ENCODE measurements at regions of chr10 and their contacts with region 1.

Region 1: GRCh38 chr10:98852686-98853085 is 383.0 kb downstream of the HPSE2 start:
- DNase-seq: no peak
- ATAC-seq: peak; percentile 43; the same call in 1 of the 2 replicates
- H3K4me3 Mint-ChIP-seq: no peak overlapping the region
- H3K27ac Mint-ChIP-seq: no peak overlapping the region
- H3K4me1 Mint-ChIP-seq: peaks cover 6% of the 10 kb centered on the region; the same call in 1 of the 2 replicates
- H3K27me3 Mint-ChIP-seq: no peaks in the 10 kb centered on the region
- CTCF ChIP-seq: peak; percentile 31; the same call in 1 of the 2 replicates

Region 2: DNA sequence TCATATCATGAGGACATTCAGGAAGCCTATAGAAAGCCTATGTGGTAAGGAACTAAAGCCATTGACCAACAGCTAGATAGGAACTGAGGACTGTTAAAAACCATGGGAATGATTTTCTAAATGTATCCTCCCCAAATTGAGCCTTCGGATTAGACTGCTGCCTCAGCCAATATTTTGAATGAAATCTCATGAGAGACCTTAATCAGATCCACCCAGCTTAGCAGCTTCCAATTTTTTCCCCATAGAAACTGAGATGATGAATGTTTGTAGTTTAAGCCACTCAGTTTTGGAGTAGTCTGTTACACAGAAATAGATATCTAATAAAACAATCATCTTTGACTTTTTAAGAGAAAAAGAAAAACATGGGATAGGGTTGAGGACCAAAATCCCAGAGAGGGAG is 91.0 kb after region 1 on chr10:
- CTCF ChIA-PET with region 1: no interaction called
- POLR2A ChIA-PET with region 1: no interaction called
- DNase-seq: no peak
- ATAC-seq: no peak
- H3K4me3 Mint-ChIP-seq: no peak overlapping the region
- H3K27ac Mint-ChIP-seq: no peak overlapping the region
- H3K4me1 Mint-ChIP-seq: no peaks in the 10 kb centered on the region
- H3K27me3 Mint-ChIP-seq: no peaks in the 10 kb centered on the region
- CTCF ChIP-seq: no peak

Region 3: DNA sequence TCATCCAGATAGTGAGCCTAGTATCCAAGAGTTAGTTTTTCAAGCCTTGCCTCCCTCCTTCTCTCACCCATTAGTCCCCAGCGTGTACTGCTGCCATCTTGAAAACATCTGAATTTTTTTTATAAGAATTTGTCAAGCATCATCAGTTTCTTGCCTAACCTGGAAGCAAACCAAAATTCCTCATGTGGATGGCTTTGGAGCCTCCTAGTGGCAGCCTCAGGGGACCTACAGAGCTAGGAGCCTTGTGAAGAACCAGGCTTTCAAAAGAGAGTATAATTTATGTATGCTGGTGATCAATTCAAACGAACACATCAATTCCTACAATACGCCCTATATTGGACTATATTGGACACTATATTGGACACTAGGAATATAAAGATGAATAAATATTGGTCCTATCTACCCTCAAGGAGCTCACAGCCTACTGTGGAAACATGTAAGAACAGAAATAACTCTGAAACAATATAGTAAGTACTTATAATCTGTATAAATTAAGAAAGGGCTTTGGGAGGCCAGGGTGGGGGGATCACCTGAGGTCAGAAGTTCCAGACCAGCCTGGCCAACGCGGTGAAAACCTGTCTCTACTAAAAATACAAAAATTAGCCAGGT is 319.5 kb after region 1 on chr10:
- CTCF ChIA-PET with region 1: interaction called, 11 read pairs
- POLR2A ChIA-PET with region 1: no interaction called
- DNase-seq: peak; percentile 65
- ATAC-seq: peak; percentile 81
- H3K4me3 Mint-ChIP-seq: no peak overlapping the region
- H3K27ac Mint-ChIP-seq: no peak overlapping the region
- H3K4me1 Mint-ChIP-seq: peaks cover 13% of the 10 kb centered on the region
- H3K27me3 Mint-ChIP-seq: no peaks in the 10 kb centered on the region
- CTCF ChIP-seq: peak; percentile 61